ENCODE measurements at regions of chr2 and their contacts with region 1.

Region 1: DNA sequence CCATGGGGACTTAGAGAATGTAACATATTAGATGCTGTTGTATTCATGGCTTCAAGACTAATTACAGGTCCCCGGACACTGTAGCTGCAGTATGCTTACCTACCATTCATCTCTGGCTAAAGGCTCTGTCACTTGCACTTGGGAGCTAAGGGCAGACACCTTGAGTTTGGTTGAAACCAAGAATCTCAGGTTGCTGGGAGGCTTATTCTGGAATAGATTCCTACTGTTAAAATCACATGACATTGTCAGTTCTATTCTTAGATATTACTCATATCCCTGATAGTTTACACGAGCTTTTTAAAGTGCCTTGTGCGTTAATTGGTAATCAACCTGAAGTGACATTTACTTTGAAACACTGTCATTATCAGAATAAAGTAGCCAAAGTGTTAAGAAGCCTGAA is 73.0 kb upstream of the EPB41L5 start:
- DNase-seq: no peak
- ATAC-seq: no peak
- H3K4me3 ChIP-seq: no peak overlapping the region
- H3K27ac ChIP-seq: no peak overlapping the region
- H3K4me1 ChIP-seq: no peaks in the 10 kb centered on the region
- H3K27me3 ChIP-seq: no peaks in the 10 kb centered on the region
- CTCF ChIP-seq: no peak
- POLR2A ChIP-seq: no peak

Region 2: GRCh38 chr2:119721462-119721861 is 218.5 kb before region 1 on chr2:
- intact Hi-C with region 1: loop called (anchors 10 kb)
- DNase-seq: peak in 1 of 4 donors; percentile 10
- ATAC-seq: no peak
- H3K4me3 ChIP-seq: no peak overlapping the region
- H3K27ac ChIP-seq: no peak overlapping the region
- H3K4me1 ChIP-seq: no peaks in the 10 kb centered on the region
- H3K27me3 ChIP-seq: no peaks in the 10 kb centered on the region
- CTCF ChIP-seq: no peak
- POLR2A ChIP-seq: no peak

Region 3: DNA sequence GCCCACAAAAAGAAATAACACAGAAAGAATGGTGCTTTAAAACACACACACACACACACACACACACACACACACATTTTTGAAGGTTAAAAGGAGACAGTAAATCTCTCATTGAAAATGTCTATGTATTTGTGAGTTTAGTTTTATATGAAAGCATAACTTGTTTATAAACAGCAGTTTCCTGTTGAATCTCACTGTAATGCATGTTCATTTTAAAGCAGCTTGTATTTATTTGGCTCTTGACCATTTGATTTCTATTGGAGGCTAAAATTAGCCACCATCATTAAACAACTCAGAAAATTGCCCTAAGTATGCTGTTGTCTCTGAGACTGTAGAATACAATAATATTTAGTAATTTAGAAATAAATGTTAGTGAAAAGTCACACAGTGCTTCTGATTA is 188.3 kb after region 1 on chr2:
- intact Hi-C with region 1: no loop called
- DNase-seq: no peak
- ATAC-seq: no peak
- H3K4me3 ChIP-seq: no peak overlapping the region
- H3K27ac ChIP-seq: no peak overlapping the region
- H3K4me1 ChIP-seq: no peaks in the 10 kb centered on the region
- H3K27me3 ChIP-seq: no peaks in the 10 kb centered on the region
- CTCF ChIP-seq: no peak
- POLR2A ChIP-seq: no peak

Region 4: DNA sequence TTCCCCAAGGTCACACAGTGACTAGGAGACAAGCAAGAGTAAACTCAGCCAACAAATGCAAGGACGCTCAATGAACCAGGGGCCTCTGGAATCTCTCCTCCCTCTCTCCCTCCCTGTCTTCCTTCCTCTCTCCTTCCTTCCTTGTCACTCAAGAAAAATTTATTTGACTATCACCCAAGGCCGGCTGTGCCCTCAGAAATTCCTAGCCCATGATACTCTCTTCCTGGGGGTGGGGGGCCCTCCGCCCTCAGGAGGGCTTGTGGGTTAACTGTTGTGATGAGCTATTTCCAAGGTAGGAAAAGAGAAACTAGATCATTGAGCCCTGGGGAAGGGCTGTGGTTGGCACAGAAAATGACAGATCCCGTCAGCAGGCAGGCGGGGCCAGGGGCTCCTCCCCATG is 427.7 kb after region 1 on chr2:
- intact Hi-C with region 1: no loop called
- DNase-seq: no peak
- ATAC-seq: no peak
- H3K4me3 ChIP-seq: no peak overlapping the region
- H3K27ac ChIP-seq: no peak overlapping the region
- H3K4me1 ChIP-seq: no peaks in the 10 kb centered on the region
- H3K27me3 ChIP-seq: no peaks in the 10 kb centered on the region
- CTCF ChIP-seq: no peak
- POLR2A ChIP-seq: no peak

Measured in body of pancreas (tissue), 4 donors.